ENCODE measurements at regions of chr3 and their contacts with region 1.

Region 1: DNA sequence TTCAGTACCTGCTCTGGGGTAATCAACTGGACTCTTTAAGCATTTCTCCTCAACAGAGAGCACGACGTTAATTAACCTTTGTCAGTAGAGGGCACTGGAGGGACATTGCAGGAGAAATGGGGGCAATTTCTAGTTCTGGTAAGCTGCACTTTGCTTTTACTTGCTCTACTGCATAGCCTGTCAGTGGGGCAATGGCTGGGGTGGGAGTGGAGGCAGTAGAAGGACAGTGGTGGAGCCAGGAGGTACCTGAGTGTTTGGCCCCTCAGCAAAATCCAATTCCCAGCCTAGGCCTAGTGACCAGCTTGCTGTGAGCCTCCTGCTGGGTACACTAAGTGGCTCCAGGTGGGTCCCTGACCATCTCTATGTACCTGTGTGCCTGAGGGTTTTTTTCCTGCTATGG is 18.3 kb upstream of the MED12L start:
- DNase-seq: peak; percentile 24
- H3K4me3 Mint-ChIP-seq: no peak overlapping the region
- H3K27ac Mint-ChIP-seq: no peak overlapping the region
- H3K4me1 Mint-ChIP-seq: no peaks in the 10 kb centered on the region
- H3K27me3 Mint-ChIP-seq: peaks cover 14% of the 10 kb centered on the region

Region 2: DNA sequence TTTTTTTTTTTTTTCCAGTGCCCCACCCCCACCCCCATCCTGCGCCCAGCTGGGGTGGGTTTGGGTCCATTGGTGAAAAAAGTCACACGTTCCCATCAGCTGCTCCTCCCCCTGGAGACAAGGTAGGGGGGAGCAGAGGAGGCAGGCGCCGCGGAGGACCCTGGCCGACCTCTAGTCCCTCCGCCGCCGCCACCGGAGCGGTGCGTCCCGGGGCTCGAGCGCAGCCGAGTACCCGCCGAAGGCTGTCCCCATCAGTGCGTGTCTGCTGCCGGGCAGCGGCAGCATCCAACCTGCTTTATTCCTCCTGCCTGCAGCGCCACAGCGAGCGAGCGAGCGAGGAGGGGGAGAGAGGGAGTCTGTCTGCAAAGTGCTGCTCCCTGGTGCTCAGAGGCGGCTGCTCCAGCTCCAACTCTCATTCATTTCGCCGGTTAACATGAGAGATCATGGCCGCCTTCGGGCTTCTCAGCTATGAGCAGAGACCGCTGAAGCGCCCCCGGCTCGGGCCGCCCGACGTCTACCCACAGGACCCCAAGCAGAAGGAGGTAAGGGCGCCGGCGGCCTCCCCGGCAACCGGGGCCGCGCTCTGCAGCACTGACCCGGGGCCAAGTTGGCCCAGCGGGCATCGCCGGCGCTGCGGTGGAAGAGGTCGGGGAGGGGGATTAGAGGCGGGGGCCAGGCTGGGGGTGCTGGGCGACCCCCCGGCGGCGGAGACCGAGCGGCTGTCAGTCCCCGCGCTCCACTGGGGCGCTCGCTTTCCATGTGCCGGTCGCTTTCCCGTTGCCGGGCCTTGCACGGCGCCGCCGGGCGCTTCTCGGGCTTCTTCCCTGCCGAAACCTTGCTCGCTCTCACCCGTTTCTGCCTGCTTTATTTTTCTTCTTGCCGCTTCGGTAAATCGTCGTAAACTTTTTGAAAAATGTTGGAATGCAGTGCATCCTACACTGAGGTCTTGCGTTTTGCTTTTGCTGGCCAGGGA is 19.6 kb after region 1 on chr3:
- CTCF ChIA-PET with region 1: interaction called, 11 read pairs
- DNase-seq: peak; percentile 84
- H3K4me3 Mint-ChIP-seq: peak overlapping the region; percentile 81
- H3K27ac Mint-ChIP-seq: peak overlapping the region; percentile 39
- H3K4me1 Mint-ChIP-seq: peaks cover 14% of the 10 kb centered on the region
- H3K27me3 Mint-ChIP-seq: peaks cover 67% of the 10 kb centered on the region

Region 3: GRCh38 chr3:151146071-151146730 is 79.0 kb after region 1 on chr3:
- CTCF ChIA-PET with region 1: interaction called, 13 read pairs
- DNase-seq: peak; percentile 69
- H3K4me3 Mint-ChIP-seq: no peak overlapping the region
- H3K27ac Mint-ChIP-seq: no peak overlapping the region
- H3K4me1 Mint-ChIP-seq: peaks cover 3% of the 10 kb centered on the region
- H3K27me3 Mint-ChIP-seq: peaks cover 17% of the 10 kb centered on the region

Measured in activated naive CD4-positive, alpha-beta T cell treated with anti-CD3 and anti-CD28 coated beads, Interleukin-2, amount 10 ng/mL, durations not matched to agents 7 days and 5 days (primary cell).